Heart left ventricle (tissue), 16 donors: ENCODE measurements at regions of chr3 and their contacts with region 1.

Region 1: DNA sequence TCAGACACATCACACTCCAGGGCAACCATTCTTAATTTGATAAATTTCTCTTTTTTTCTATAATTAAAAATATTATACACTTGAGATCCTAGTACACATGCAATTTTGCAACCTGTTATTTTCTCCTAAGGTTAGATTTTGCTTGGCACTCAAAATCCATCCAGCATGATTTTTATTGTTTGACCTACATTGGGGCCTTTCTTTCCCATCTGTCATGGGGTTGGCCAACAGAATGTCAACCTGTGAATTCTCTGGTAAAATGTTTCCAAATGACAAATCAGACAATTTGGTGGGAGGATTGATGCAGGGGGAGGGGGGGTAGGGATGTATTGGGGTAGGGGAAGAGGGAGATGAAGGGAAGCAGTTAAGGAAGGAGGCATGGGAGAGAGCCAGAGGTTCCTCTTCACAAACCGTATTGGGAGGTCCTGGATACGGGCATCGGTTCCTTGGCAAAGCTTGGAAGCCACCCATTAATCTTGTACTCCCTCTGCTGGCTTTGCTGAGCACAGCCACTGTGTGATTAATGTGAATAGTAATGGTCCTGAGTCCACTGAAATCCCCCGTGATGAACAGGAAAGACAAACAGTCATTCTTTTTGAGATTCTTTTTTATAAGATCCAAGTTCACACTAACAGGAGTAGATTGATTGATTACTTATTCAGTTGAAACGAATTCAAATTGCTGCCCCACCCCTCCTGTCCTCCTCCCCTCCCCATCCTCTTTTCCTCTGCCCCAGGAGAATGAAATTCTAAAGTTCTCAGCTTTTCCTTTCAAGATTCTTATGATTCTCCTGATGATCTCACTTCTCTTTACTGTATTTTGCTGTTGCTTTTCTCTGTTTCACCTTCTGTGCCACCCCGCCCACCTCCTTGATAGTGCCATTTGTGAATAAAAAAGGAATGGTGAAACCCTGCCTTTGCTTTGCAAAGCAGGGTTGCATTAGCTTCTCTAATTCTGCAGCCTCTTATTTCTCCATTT is 82.2 kb upstream of the SLC25A26 start:
- DNase-seq: peak in 4 of 5 donors; percentile 42 to 63 (median 54)
- ATAC-seq: peak; percentile 75 to 93 (median 89)
- H3K4me3 ChIP-seq: no peak overlapping the region
- H3K27ac ChIP-seq: peak overlapping the region in 5 of 12 donors; percentile 6 to 21 (median 11)
- H3K4me1 ChIP-seq: peaks cover 0 to 15% (median 2%) of the 10 kb centered on the region in 12 donors
- H3K27me3 ChIP-seq: no peaks in the 10 kb centered on the region
- CTCF ChIP-seq: peak; percentile 49 to 89 (median 80)
- POLR2A ChIP-seq: no peak

Region 2: GRCh38 chr3:65439641-65440284 is 698.9 kb before region 1 on chr3:
- intact Hi-C with region 1: loop called in 1 of 10 experiments (anchors 10 kb)
- DNase-seq: peak in 4 of 5 donors; percentile 47 to 69 (median 62)
- ATAC-seq: peak; percentile 80 to 91 (median 90)
- H3K4me3 ChIP-seq: no peak overlapping the region
- H3K27ac ChIP-seq: no peak overlapping the region
- H3K4me1 ChIP-seq: peaks cover 0 to 10% (median 6%) of the 10 kb centered on the region in 12 donors
- H3K27me3 ChIP-seq: no peaks in the 10 kb centered on the region
- CTCF ChIP-seq: peak; percentile 30 to 77 (median 64)
- POLR2A ChIP-seq: no peak

Region 3: GRCh38 chr3:65914740-65915367 is 223.8 kb before region 1 on chr3:
- intact Hi-C with region 1: loop called in 3 of 10 experiments (anchors 5 to 10 kb)
- DNase-seq: no peak
- ATAC-seq: peak in 1 of 4 donors; percentile 53
- H3K4me3 ChIP-seq: no peak overlapping the region
- H3K27ac ChIP-seq: no peak overlapping the region
- H3K4me1 ChIP-seq: peaks cover 0 to 53% (median 22%) of the 10 kb centered on the region in 12 donors
- H3K27me3 ChIP-seq: no peaks in the 10 kb centered on the region
- CTCF ChIP-seq: peak in 1 of 12 donors; percentile 16
- POLR2A ChIP-seq: no peak

Region 4: GRCh38 chr3:66228707-66229106 is 90.1 kb after region 1 on chr3:
- intact Hi-C with region 1: no loop called
- DNase-seq: no peak
- ATAC-seq: no peak
- H3K4me3 ChIP-seq: no peak overlapping the region
- H3K27ac ChIP-seq: no peak overlapping the region
- H3K4me1 ChIP-seq: peaks cover 0 to 8% (median 0%) of the 10 kb centered on the region in 12 donors
- H3K27me3 ChIP-seq: no peaks in the 10 kb centered on the region
- CTCF ChIP-seq: no peak
- POLR2A ChIP-seq: no peak

Region 5: GRCh38 chr3:66239513-66240123 is 101.0 kb after region 1 on chr3:
- intact Hi-C with region 1: no loop called
- DNase-seq: no peak
- ATAC-seq: no peak
- H3K4me3 ChIP-seq: no peak overlapping the region
- H3K27ac ChIP-seq: no peak overlapping the region
- H3K4me1 ChIP-seq: peaks cover 0 to 4% (median 0%) of the 10 kb centered on the region in 12 donors
- H3K27me3 ChIP-seq: no peaks in the 10 kb centered on the region
- CTCF ChIP-seq: no peak
- POLR2A ChIP-seq: no peak